ENCODE measurements at regions of chr18 and their contacts with region 1.

Region 1: GRCh38 chr18:24031916-24032315 is 17.4 kb downstream of the TTC39C start:
- DNase-seq: no peak
- H3K4me3 ChIP-seq: no peak overlapping the region
- H3K27ac ChIP-seq: no peak overlapping the region
- H3K4me1 ChIP-seq: peaks cover 20% of the 10 kb centered on the region
- H3K27me3 ChIP-seq: no peaks in the 10 kb centered on the region
- CTCF ChIP-seq: no peak
- POLR2A ChIP-seq: no peak

Region 2: GRCh38 chr18:23377669-23378301 is 654.1 kb before region 1 on chr18:
- intact Hi-C with region 1: loop called (anchors 5 kb)
- DNase-seq: no peak
- H3K4me3 ChIP-seq: no peak overlapping the region
- H3K27ac ChIP-seq: peak overlapping the region; percentile 91
- H3K4me1 ChIP-seq: peaks cover 36% of the 10 kb centered on the region
- H3K27me3 ChIP-seq: no peaks in the 10 kb centered on the region
- CTCF ChIP-seq: no peak
- POLR2A ChIP-seq: no peak

Region 3: DNA sequence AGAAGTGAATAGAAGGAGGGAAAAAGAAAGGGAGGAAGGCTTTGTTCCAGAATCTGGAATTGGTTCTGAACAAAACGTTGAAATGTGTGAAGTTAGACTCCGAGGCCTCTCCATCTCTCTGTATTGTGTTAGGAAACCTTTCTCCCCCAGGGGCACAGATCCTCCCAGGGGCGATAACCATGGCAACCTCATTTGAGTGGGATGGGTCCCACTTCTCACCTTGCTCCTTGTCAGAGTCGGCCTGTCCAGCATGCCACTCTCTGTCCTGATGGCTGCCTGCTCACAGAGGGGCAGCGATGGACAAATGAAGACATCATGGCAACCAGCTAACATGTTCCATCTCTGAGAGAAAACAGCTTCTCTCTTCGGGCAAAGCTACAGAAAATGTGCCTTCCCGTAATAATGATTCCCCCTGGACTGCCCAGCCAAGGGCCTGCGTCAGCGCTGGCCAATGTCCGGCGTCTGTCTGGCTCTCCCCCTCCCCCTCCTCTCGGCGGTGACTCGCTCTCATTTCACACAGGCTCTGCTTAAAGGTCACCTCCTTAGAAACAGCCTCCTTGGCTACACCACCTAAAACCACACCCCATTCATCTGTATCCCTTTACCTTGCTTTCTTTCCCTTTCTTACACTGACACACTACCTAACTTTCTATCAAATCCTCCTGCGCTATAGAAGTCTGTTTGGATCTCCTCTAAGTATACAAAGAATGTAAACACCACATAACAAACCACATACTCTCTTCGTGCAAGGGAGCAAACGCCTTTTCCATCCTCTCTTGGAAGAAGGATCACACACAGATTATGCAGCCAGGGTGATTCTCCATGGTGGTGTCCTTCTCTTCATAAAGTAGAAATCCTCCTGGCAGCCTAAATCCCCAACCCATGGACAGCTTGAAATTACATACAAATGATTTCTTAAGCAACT is 49.5 kb before region 1 on chr18:
- intact Hi-C with region 1: no loop called
- DNase-seq: no peak
- H3K4me3 ChIP-seq: peak overlapping the region in 1 of 2 donors; percentile 5
- H3K27ac ChIP-seq: peak overlapping the region; percentile 4
- H3K4me1 ChIP-seq: peaks cover 18% of the 10 kb centered on the region
- H3K27me3 ChIP-seq: no peaks in the 10 kb centered on the region
- CTCF ChIP-seq: no peak
- POLR2A ChIP-seq: no peak

Region 4: GRCh38 chr18:23994361-23994902 is 37.5 kb before region 1 on chr18:
- intact Hi-C with region 1: no loop called
- DNase-seq: no peak
- H3K4me3 ChIP-seq: no peak overlapping the region
- H3K27ac ChIP-seq: no peak overlapping the region
- H3K4me1 ChIP-seq: peaks cover 20% of the 10 kb centered on the region
- H3K27me3 ChIP-seq: no peaks in the 10 kb centered on the region
- CTCF ChIP-seq: no peak
- POLR2A ChIP-seq: peak in 1 of 2 donors; percentile 21

Region 5: GRCh38 chr18:24138789-24139616 is 107.1 kb after region 1 on chr18 and contains the start of gene CABYR:
- intact Hi-C with region 1: no loop called
- DNase-seq: no peak
- H3K4me3 ChIP-seq: peak within 1 kb of the TSS; percentile 54 to 60
- H3K27ac ChIP-seq: peak within 1 kb of the TSS; percentile 47
- H3K4me1 ChIP-seq: peaks cover 14% of the 10 kb centered on the region
- H3K27me3 ChIP-seq: no peaks in the 10 kb centered on the region
- CTCF ChIP-seq: no peak
- POLR2A ChIP-seq: peak in 1 of 2 donors; percentile 17
- total RNA-seq, gene CABYR: 0.74 TPM

Measured in vagina (tissue), 2 donors.